Activated naive CD4-positive, alpha-beta T cell treated with anti-CD3 and anti-CD28 coated beads for 36 hours (primary cell): ENCODE measurements at regions of chr18 and their contacts with region 1.

Region 1: DNA sequence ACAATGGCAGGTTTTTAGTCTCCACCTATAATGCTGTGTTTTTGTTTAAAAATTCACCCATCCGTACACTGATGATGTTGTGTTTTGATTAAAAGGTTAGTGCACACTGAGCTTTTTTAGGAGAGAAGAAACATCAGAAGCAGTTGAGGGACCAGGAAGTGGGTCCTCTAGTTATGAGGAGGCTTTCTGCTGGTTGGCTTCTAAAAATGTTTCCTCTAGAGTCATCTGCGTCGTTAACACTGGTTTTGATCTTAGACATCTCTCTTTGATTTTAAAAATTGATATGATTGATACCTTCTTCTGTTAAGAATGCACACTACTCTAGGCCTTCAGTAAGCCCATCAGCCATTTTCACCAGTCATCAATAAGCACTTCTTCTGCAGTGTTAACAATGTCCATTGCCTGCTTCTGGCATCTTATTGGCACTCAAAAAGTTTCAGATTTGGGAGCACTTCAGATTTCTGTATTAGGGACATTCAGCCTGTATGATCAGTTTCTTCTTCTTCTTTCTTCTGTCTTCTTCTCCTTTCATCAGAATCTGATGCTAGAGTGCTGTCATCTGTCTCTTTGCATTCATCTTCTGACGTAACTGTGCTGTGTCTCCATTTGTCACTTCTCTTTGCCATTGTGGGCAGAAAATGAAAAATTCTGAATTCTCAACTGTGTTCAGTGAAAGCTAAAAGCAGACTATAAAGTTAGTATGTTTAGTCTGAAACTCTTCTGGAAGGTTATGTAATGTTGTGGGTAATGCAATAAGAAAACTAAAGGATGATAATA is 56.3 kb downstream of the PHLPP1 start:
- DNase-seq: peak; percentile 19
- H3K4me3 Mint-ChIP-seq: no peak overlapping the region
- H3K27ac Mint-ChIP-seq: no peak overlapping the region
- H3K4me1 Mint-ChIP-seq: peaks cover 17% of the 10 kb centered on the region
- H3K27me3 Mint-ChIP-seq: no peaks in the 10 kb centered on the region

Region 2: DNA sequence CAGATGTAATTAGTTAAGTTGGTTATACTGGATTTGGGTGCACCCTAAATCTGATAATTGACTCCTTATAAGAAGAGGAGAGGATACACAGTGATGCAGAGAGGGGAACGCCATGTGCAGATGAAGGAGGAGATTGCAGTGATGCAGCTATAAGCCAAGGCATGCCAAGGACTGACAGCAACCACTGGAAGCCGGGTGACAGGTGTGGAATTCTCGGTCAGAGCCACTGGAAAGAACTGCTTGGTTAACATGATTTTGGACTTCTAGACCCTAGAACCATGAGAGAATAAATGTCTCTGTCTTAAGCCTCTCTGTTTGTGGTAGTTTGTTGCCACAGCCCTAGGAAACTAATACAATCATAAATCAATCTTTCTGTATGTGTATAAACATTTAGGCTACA is 1841.7 kb before region 1 on chr18:
- CTCF ChIA-PET with region 1: no interaction called
- intact Hi-C with region 1: no loop called
- DNase-seq: no peak
- H3K4me3 Mint-ChIP-seq: no peak overlapping the region
- H3K27ac Mint-ChIP-seq: no peak overlapping the region
- H3K4me1 Mint-ChIP-seq: no peaks in the 10 kb centered on the region
- H3K27me3 Mint-ChIP-seq: no peaks in the 10 kb centered on the region

Region 3: DNA sequence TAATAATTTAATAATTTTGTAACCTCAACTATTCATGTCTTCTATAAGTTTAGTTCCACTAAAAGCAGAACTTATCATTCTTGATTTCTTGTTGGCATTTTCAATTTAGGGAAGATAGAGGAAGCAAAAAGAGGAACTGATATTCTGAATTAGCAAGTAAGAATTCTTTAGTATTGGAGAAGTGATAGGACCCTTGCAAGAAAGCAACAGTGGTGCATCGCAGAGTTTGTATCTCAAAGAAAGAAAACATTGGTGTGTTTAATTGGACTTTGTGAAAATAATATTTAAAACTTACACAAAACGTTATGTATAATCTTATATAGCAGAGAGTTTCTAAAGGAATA is 483.0 kb before region 1 on chr18:
- CTCF ChIA-PET with region 1: no interaction called
- intact Hi-C with region 1: loop called (anchors 5 kb)
- DNase-seq: no peak
- H3K4me3 Mint-ChIP-seq: no peak overlapping the region
- H3K27ac Mint-ChIP-seq: no peak overlapping the region
- H3K4me1 Mint-ChIP-seq: peaks cover 32% of the 10 kb centered on the region
- H3K27me3 Mint-ChIP-seq: no peaks in the 10 kb centered on the region

Region 4: GRCh38 chr18:62741118-62741566 is 30.5 kb before region 1 on chr18:
- CTCF ChIA-PET with region 1: no interaction called
- intact Hi-C with region 1: loop called (anchors 1 kb)
- DNase-seq: peak; percentile 66
- H3K4me3 Mint-ChIP-seq: no peak overlapping the region
- H3K27ac Mint-ChIP-seq: no peak overlapping the region
- H3K4me1 Mint-ChIP-seq: peaks cover 16% of the 10 kb centered on the region
- H3K27me3 Mint-ChIP-seq: no peaks in the 10 kb centered on the region

Region 5: GRCh38 chr18:62784966-62785413 is 13.3 kb after region 1 on chr18:
- CTCF ChIA-PET with region 1: interaction called, 3 read pairs
- intact Hi-C with region 1: loop called (anchors 1 kb)
- DNase-seq: no peak
- H3K4me3 Mint-ChIP-seq: no peak overlapping the region
- H3K27ac Mint-ChIP-seq: no peak overlapping the region
- H3K4me1 Mint-ChIP-seq: peaks cover 37% of the 10 kb centered on the region
- H3K27me3 Mint-ChIP-seq: peaks cover 5% of the 10 kb centered on the region